ENCODE measurements at regions of chr17 and their contacts with region 1.

Region 1: GRCh38 chr17:76191896-76192295 is 48.4 kb downstream of the RNF157 start:
- DNase-seq: peak in 9 of 10 donors; percentile 20 to 92 (median 69)
- ATAC-seq: peak; percentile 90
- H3K4me3 Mint-ChIP-seq: peak overlapping the region; percentile 56 to 84 (median 78)
- H3K27ac Mint-ChIP-seq: peak overlapping the region; percentile 90 to 99 (median 96)
- H3K4me1 Mint-ChIP-seq: peaks cover 43 to 84% (median 80%) of the 10 kb centered on the region in 4 donors
- H3K27me3 Mint-ChIP-seq: no peaks in the 10 kb centered on the region

Region 2: GRCh38 chr17:76204277-76204676 is 12.4 kb after region 1 on chr17:
- POLR2A ChIA-PET with region 1: interaction called, 13 read pairs
- DNase-seq: no peak
- ATAC-seq: no peak
- H3K4me3 Mint-ChIP-seq: no peak overlapping the region
- H3K27ac Mint-ChIP-seq: peak overlapping the region; percentile 17 to 82 (median 52)
- H3K4me1 Mint-ChIP-seq: peaks cover 20 to 67% (median 64%) of the 10 kb centered on the region in 4 donors
- H3K27me3 Mint-ChIP-seq: no peaks in the 10 kb centered on the region

Region 3: DNA sequence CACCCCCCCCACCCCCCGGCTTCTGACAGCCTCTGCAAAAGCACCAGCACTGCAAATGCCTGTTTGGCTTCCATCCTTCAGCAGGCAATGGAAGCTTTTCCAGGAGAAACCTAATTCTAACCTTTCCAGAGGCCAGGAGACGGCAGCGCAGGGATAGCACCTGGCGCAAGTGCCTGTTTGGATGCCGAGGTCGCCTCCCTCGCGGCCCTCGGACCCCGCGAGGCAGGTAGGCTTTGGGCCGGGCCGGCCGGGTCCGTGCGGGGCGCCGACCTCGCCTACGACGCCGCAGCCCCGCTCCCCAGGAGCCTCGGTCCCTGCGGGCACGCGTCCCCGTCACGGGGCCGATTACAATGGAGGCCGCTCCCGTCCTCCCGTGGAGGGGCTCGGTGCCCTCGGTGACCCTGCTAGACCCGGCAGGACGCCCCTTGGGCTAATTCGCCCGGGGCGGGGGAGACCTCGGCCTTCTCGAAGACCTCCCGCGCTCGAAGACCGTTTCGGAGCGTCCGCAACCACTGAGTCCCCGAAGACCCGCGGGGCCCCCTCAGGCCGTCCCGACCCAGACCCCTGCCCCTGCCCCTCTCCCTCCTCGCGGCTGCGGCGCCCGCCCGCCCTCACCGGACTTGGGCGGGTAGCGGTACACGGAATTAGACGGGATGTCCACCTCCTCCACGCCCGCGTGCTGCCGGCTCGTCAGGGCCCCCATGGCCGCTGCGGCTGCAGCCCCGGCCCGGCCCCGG is 47.8 kb after region 1 on chr17:
- POLR2A ChIA-PET with region 1: interaction called, 17 read pairs
- DNase-seq: peak in 3 of 10 donors; percentile 10 to 25 (median 20)
- ATAC-seq: peak; percentile 16 to 17
- H3K4me3 Mint-ChIP-seq: peak overlapping the region; percentile 80 to 94 (median 87)
- H3K27ac Mint-ChIP-seq: peak overlapping the region; percentile 63 to 95 (median 92)
- H3K4me1 Mint-ChIP-seq: peaks cover 27 to 60% (median 55%) of the 10 kb centered on the region in 4 donors
- H3K27me3 Mint-ChIP-seq: peaks cover 0 to 9% (median 0%) of the 10 kb centered on the region in 5 donors

Region 4: GRCh38 chr17:76246080-76247066 is 54.5 kb after region 1 on chr17:
- POLR2A ChIA-PET with region 1: interaction called, 15 read pairs
- DNase-seq: peak in 5 of 10 donors; percentile 24 to 69 (median 31)
- ATAC-seq: peak; percentile 83 to 91
- H3K4me3 Mint-ChIP-seq: peak overlapping the region; percentile 42 to 84 (median 70)
- H3K27ac Mint-ChIP-seq: peak overlapping the region; percentile 70 to 96 (median 91)
- H3K4me1 Mint-ChIP-seq: peaks cover 31 to 76% (median 66%) of the 10 kb centered on the region in 4 donors
- H3K27me3 Mint-ChIP-seq: peaks cover 0 to 1% (median 0%) of the 10 kb centered on the region in 5 donors

Region 5: DNA sequence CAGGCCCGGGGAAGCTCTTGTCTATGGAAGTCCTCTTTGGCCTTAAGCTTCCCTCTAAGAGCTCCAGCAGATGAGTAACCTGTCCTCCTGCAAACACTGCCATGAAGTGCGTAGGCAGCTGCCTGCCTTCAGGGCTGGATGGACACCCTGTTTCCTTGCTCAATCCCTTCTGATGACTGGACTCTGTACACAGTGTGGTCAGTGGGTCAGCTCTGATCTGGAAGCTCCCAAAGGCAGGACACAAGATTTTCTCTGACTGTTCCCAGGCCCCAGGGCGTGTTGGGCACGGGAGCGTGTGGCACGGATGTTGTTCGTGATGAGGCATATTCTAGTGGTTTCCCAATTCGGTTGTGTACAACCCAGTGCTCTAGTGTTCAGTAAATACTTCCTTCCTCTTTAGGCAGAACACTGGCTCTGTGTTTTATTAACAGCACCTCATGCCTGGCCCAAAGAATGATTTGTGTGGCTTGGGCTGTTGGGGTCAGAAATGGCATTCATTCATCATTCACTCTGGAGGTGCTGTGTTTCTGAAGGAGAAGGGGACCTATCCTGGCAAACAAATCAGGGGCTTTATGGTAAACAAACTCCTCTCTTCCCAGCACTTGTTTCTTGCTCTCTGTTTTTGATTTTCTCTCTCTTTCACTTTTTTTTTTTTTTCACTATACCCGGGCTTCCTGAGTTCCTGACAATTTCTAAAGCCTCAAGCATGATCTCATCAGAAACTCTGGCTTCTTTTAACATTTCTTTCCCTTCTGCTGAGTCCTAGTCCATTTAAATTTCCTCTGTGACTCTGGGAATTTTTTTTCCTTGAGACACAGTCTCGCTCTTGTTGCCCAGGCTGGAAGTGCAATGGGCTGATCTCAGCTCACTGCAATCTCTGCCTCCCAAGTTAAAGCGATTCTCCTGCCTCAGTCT is 60.4 kb after region 1 on chr17:
- POLR2A ChIA-PET with region 1: interaction called, 15 read pairs
- DNase-seq: peak in 4 of 10 donors; percentile 26 to 56 (median 48)
- ATAC-seq: peak; percentile 48 to 71
- H3K4me3 Mint-ChIP-seq: peak overlapping the region; percentile 63 to 86 (median 77)
- H3K27ac Mint-ChIP-seq: peak overlapping the region; percentile 90 to 98 (median 92)
- H3K4me1 Mint-ChIP-seq: peaks cover 33 to 69% (median 66%) of the 10 kb centered on the region in 4 donors
- H3K27me3 Mint-ChIP-seq: no peaks in the 10 kb centered on the region

Measured in naive thymus-derived CD8-positive, alpha-beta T cell (primary cell).